ENCODE measurements at regions of chr2 and their contacts with region 1.

Region 1: GRCh38 chr2:190843874-190844699 is 36.5 kb upstream of the GLS start:
- DNase-seq: peak; percentile 76
- H3K4me3 Mint-ChIP-seq: peak overlapping the region; percentile 22
- H3K27ac Mint-ChIP-seq: peak overlapping the region; percentile 85
- H3K4me1 Mint-ChIP-seq: peaks cover 48% of the 10 kb centered on the region
- H3K27me3 Mint-ChIP-seq: no peaks in the 10 kb centered on the region

Region 2: GRCh38 chr2:190319555-190320498 is 524.3 kb before region 1 on chr2 and contains the start of gene HIBCH:
- CTCF ChIA-PET with region 1: no interaction called
- intact Hi-C with region 1: loop called (anchors 1 kb)
- DNase-seq: peak; percentile 94
- H3K4me3 Mint-ChIP-seq: peak within 1 kb of the TSS; percentile 91
- H3K27ac Mint-ChIP-seq: peak within 1 kb of the TSS; percentile 88
- H3K4me1 Mint-ChIP-seq: peaks cover 39% of the 10 kb centered on the region
- H3K27me3 Mint-ChIP-seq: no peaks in the 10 kb centered on the region
- total RNA-seq, gene HIBCH: 19.2 TPM

Region 3: GRCh38 chr2:190648289-190649034 is 195.6 kb before region 1 on chr2:
- CTCF ChIA-PET with region 1: no interaction called
- intact Hi-C with region 1: loop called (anchors 5 kb)
- DNase-seq: peak; percentile 81
- H3K4me3 Mint-ChIP-seq: peak overlapping the region; percentile 68
- H3K27ac Mint-ChIP-seq: peak overlapping the region; percentile 76
- H3K4me1 Mint-ChIP-seq: peaks cover 43% of the 10 kb centered on the region
- H3K27me3 Mint-ChIP-seq: no peaks in the 10 kb centered on the region

Region 4: GRCh38 chr2:190781604-190782198 is 62.4 kb before region 1 on chr2:
- CTCF ChIA-PET with region 1: interaction called, 3 read pairs
- intact Hi-C with region 1: loop called (anchors 2 kb)
- DNase-seq: peak; percentile 77
- H3K4me3 Mint-ChIP-seq: no peak overlapping the region
- H3K27ac Mint-ChIP-seq: no peak overlapping the region
- H3K4me1 Mint-ChIP-seq: peaks cover 26% of the 10 kb centered on the region
- H3K27me3 Mint-ChIP-seq: no peaks in the 10 kb centered on the region

Region 5: DNA sequence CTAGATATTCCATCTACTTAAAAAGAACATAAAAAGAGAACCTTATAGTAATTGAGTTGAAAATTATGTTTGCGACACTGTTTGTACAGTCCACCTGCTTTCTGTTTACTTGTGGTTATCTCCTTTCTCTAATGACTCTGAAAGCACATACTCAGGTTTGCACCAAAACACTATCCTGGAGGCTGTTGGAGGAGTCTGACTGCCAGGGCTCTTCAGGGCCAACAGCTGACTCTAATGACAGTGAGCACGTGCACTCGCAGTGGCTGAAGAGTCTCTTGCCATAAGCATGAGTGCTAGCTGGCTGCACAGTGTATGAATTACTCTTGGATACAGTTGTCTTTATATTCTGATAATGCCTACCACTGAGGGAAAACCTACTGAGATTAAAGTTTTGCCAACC is 19.9 kb after region 1 on chr2:
- CTCF ChIA-PET with region 1: no interaction called
- intact Hi-C with region 1: loop called (anchors 1 kb)
- DNase-seq: no peak
- H3K4me3 Mint-ChIP-seq: no peak overlapping the region
- H3K27ac Mint-ChIP-seq: no peak overlapping the region
- H3K4me1 Mint-ChIP-seq: peaks cover 26% of the 10 kb centered on the region
- H3K27me3 Mint-ChIP-seq: no peaks in the 10 kb centered on the region

Region 6: GRCh38 chr2:190875891-190876290 is 31.8 kb after region 1 on chr2:
- CTCF ChIA-PET with region 1: no interaction called
- intact Hi-C with region 1: no loop called
- DNase-seq: peak; percentile 59
- H3K4me3 Mint-ChIP-seq: peak overlapping the region; percentile 53
- H3K27ac Mint-ChIP-seq: peak overlapping the region; percentile 79
- H3K4me1 Mint-ChIP-seq: peaks cover 30% of the 10 kb centered on the region
- H3K27me3 Mint-ChIP-seq: no peaks in the 10 kb centered on the region

Region 7: GRCh38 chr2:191013932-191014652 is 170.0 kb after region 1 on chr2 and contains the start of gene STAT1:
- CTCF ChIA-PET with region 1: no interaction called
- intact Hi-C with region 1: loop called (anchors 1 kb)
- DNase-seq: peak; percentile 95
- H3K4me3 Mint-ChIP-seq: no peak within 1 kb of the TSS
- H3K27ac Mint-ChIP-seq: no peak within 1 kb of the TSS
- H3K4me1 Mint-ChIP-seq: peaks cover 39% of the 10 kb centered on the region
- H3K27me3 Mint-ChIP-seq: no peaks in the 10 kb centered on the region
- total RNA-seq, gene STAT1: 376 to 402 TPM

Region 8: DNA sequence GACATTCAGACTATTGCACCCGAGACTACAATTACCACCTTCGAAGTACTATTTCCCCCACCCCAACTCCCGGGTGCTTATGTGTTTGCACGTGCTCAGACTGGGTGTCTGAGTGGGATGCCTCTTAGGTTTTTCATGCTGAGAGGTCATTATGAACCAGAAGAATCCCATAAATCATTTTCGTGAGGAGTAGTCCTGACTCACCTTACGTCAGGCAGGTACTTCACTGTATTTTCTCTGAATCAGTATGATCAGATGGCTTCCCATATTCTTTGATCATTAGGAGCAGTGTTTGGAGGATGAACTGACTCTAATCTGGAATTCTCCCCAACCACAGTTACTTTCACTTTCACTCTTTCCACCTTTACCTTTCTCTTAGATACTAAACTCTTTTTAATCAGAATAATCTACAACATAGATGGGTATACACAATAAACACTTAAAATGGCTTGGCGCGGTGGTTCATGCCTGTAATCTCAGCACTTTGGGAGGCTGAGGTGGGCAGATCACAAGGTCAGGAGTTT is 345.1 kb after region 1 on chr2:
- CTCF ChIA-PET with region 1: no interaction called
- intact Hi-C with region 1: loop called (anchors 1 kb)
- DNase-seq: no peak
- H3K4me3 Mint-ChIP-seq: no peak overlapping the region
- H3K27ac Mint-ChIP-seq: peak overlapping the region; percentile 68
- H3K4me1 Mint-ChIP-seq: peaks cover 73% of the 10 kb centered on the region
- H3K27me3 Mint-ChIP-seq: no peaks in the 10 kb centered on the region